ENCODE measurements at regions of chr16 and their contacts with region 1.

Region 1: DNA sequence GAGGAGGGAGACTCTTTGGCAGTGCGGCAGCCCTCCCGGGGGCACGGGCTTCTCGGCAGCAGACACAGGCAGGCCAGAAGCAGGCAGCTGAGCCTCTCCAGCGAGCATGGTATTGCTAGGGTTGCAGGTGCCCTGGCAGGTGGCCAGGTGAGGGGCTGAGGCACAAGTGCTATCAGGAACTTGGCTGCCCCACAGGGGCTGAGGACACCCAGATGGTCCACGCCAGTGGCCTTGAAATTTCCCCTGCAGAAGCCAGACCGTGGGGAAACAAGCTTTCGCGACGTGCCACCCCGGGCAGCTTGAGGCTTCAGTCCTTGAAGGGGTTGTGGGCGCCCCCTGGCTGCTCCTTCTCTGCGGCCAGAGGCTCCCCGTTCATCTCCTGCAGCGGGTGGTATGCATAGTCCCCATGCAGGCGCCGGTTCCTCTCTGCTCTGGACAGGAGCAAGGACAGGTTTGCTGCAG is 8.5 kb downstream of the NAGPA start:
- DNase-seq: peak; percentile 28
- H3K4me3 Mint-ChIP-seq: no peak overlapping the region
- H3K27ac Mint-ChIP-seq: no peak overlapping the region
- H3K4me1 Mint-ChIP-seq: no peaks in the 10 kb centered on the region
- H3K27me3 Mint-ChIP-seq: peaks cover 33% of the 10 kb centered on the region
- CTCF ChIP-seq: peak; percentile 11

Region 2: GRCh38 chr16:4511441-4512082 is 513.6 kb before region 1 on chr16:
- CTCF ChIA-PET with region 1: no interaction called
- intact Hi-C with region 1: loop called (anchors 10 kb)
- DNase-seq: peak; percentile 73
- H3K4me3 Mint-ChIP-seq: no peak overlapping the region
- H3K27ac Mint-ChIP-seq: peak overlapping the region; percentile 18
- H3K4me1 Mint-ChIP-seq: no peaks in the 10 kb centered on the region
- H3K27me3 Mint-ChIP-seq: no peaks in the 10 kb centered on the region
- CTCF ChIP-seq: peak; percentile 66

Region 3: GRCh38 chr16:4713663-4714501 is 311.3 kb before region 1 on chr16:
- CTCF ChIA-PET with region 1: no interaction called
- intact Hi-C with region 1: loop called (anchors 10 kb)
- DNase-seq: no peak
- H3K4me3 Mint-ChIP-seq: no peak overlapping the region
- H3K27ac Mint-ChIP-seq: no peak overlapping the region
- H3K4me1 Mint-ChIP-seq: no peaks in the 10 kb centered on the region
- H3K27me3 Mint-ChIP-seq: no peaks in the 10 kb centered on the region
- CTCF ChIP-seq: no peak

Region 4: DNA sequence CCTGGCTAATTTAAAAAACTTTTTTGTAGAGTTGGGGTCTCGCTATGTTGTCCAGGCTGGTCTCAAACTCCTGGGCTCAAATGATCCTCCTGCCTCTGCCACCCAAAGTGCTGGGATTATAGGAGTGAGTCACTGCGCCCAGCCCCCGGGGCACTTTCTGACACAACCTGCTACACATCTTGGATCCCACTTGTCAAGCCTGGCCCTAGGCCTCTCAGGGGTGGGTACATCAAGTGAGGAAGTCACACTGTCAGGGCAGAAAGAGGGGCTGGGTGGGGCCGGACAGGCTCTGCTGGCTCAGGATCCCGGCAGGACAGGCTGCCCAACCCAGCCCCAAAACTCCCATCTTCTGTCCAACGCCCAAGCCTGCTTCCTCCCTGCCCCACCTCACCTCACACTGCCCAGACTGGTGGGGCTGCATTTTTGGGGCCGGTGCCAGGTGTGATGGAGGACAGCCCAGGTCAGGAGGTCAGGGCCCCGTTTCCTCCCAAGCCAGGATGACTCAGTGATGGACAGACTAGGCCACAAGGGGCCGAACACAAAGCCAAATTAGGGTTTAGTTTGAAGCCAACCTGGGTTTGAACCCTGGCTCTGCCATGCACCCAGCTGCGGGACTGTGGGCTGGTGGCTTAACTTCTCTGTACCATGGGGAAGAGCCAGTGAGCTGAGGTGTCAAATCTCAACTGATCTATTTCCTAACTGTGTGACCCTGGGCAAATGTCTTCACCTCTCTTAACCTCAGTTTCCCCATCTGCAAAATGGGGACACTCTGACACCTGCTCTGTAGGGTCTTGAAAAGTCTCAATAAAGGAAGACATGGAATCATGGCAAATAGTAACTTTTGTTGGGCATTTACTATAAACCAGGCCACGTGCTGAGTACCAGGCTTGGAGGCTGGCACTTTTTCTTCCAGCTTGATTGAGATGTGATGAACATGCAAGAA is 79.4 kb before region 1 on chr16:
- CTCF ChIA-PET with region 1: no interaction called
- intact Hi-C with region 1: no loop called
- DNase-seq: peak; percentile 95
- H3K4me3 Mint-ChIP-seq: peak overlapping the region; percentile 54
- H3K27ac Mint-ChIP-seq: peak overlapping the region; percentile 89
- H3K4me1 Mint-ChIP-seq: peaks cover 70% of the 10 kb centered on the region
- H3K27me3 Mint-ChIP-seq: no peaks in the 10 kb centered on the region
- CTCF ChIP-seq: no peak

Region 5: GRCh38 chr16:4976079-4976478 is 49.1 kb before region 1 on chr16:
- CTCF ChIA-PET with region 1: no interaction called
- intact Hi-C with region 1: no loop called
- DNase-seq: no peak
- H3K4me3 Mint-ChIP-seq: no peak overlapping the region
- H3K27ac Mint-ChIP-seq: no peak overlapping the region
- H3K4me1 Mint-ChIP-seq: no peaks in the 10 kb centered on the region
- H3K27me3 Mint-ChIP-seq: peaks cover 48% of the 10 kb centered on the region
- CTCF ChIP-seq: no peak